ENCODE measurements at regions of chrX and their contacts with region 1.

Region 1: GRCh38 chrX:46573331-46573891 is at the start of gene CHST7:
- DNase-seq: peak; percentile 73
- H3K4me3 Mint-ChIP-seq: peak within 1 kb of the TSS; percentile 76
- H3K27ac Mint-ChIP-seq: peak within 1 kb of the TSS; percentile 91
- H3K4me1 Mint-ChIP-seq: peaks cover 47% of the 10 kb centered on the region
- H3K27me3 Mint-ChIP-seq: no peaks in the 10 kb centered on the region
- total RNA-seq, gene CHST7: 5.1 to 6.1 TPM

Region 2: GRCh38 chrX:45769761-45770582 is 803.4 kb before region 1 on chrX:
- CTCF ChIA-PET with region 1: no interaction called
- POLR2A ChIA-PET with region 1: no interaction called
- intact Hi-C with region 1: loop called (anchors 10 kb)
- DNase-seq: peak; percentile 63
- H3K4me3 Mint-ChIP-seq: peak overlapping the region; percentile 84
- H3K27ac Mint-ChIP-seq: peak overlapping the region; percentile 95
- H3K4me1 Mint-ChIP-seq: peaks cover 54% of the 10 kb centered on the region
- H3K27me3 Mint-ChIP-seq: no peaks in the 10 kb centered on the region

Region 3: GRCh38 chrX:46366381-46367207 is 206.8 kb before region 1 on chrX:
- CTCF ChIA-PET with region 1: no interaction called
- POLR2A ChIA-PET with region 1: no interaction called
- intact Hi-C with region 1: no loop called
- DNase-seq: no peak
- H3K4me3 Mint-ChIP-seq: no peak overlapping the region
- H3K27ac Mint-ChIP-seq: no peak overlapping the region
- H3K4me1 Mint-ChIP-seq: no peaks in the 10 kb centered on the region
- H3K27me3 Mint-ChIP-seq: no peaks in the 10 kb centered on the region

Region 4: DNA sequence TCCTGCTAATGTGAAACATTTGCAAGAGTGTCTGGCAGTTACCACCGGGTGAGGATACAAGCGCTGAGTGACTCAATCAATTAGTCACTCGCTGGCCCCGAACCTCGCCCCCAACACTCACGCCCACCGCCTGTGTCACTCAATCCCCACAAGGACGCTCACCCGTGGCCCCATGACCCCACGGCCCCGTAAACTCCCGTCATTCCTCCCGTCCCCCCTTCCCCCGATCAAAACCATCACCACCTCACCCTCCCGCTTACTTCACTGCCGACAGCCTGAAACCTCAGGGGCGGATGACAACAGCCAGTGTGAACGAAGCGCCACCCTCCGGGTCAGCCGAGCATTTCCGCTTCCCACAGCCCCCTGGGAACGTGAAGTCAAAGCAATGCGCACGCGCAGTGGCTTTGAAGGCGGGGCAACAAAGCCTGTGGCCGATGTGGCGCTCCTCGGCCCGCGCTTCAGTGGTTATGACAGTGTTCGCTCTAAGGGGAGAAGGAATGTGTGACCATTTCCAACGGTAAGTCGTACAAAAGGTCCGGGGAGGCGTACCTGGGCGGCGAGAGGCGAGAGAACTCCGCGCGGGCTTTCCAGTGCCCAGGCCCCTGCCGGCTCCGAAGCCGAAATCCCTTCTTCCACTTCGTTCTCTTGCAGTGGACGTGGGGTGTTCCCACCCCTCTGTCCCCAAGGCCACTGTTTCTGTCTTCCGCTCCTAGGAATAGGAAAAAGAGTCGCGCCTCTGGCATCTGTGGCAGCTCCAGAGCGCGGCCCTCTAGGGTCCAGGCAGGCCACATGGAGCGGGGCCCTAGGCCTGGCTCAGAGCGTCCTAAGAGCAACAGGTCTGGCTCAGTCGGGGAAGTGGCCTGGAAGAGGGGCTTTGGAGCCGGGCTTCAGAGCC is 28.1 kb before region 1 on chrX and contains the start of gene ZNF674:
- CTCF ChIA-PET with region 1: no interaction called
- POLR2A ChIA-PET with region 1: no interaction called
- intact Hi-C with region 1: loop called (anchors 1 kb)
- DNase-seq: peak; percentile 95
- H3K4me3 Mint-ChIP-seq: peak within 1 kb of the TSS; percentile 92
- H3K27ac Mint-ChIP-seq: peak within 1 kb of the TSS; percentile 97
- H3K4me1 Mint-ChIP-seq: peaks cover 25% of the 10 kb centered on the region
- H3K27me3 Mint-ChIP-seq: no peaks in the 10 kb centered on the region
- total RNA-seq, gene ZNF674: 2.6 to 3.0 TPM

Region 5: GRCh38 chrX:46611658-46612362 is 38.4 kb after region 1 on chrX:
- CTCF ChIA-PET with region 1: no interaction called
- POLR2A ChIA-PET with region 1: interaction called, 3 read pairs
- intact Hi-C with region 1: loop called (anchors 5 kb)
- DNase-seq: peak; percentile 51
- H3K4me3 Mint-ChIP-seq: peak overlapping the region; percentile 28
- H3K27ac Mint-ChIP-seq: peak overlapping the region; percentile 62
- H3K4me1 Mint-ChIP-seq: peaks cover 35% of the 10 kb centered on the region
- H3K27me3 Mint-ChIP-seq: no peaks in the 10 kb centered on the region

Region 6: GRCh38 chrX:46642145-46642544 is 68.7 kb after region 1 on chrX:
- CTCF ChIA-PET with region 1: interaction called, 3 read pairs
- POLR2A ChIA-PET with region 1: interaction called, 3 read pairs
- intact Hi-C with region 1: loop called (anchors 1 kb)
- DNase-seq: no peak
- H3K4me3 Mint-ChIP-seq: no peak overlapping the region
- H3K27ac Mint-ChIP-seq: no peak overlapping the region
- H3K4me1 Mint-ChIP-seq: peaks cover 17% of the 10 kb centered on the region
- H3K27me3 Mint-ChIP-seq: no peaks in the 10 kb centered on the region

Region 7: DNA sequence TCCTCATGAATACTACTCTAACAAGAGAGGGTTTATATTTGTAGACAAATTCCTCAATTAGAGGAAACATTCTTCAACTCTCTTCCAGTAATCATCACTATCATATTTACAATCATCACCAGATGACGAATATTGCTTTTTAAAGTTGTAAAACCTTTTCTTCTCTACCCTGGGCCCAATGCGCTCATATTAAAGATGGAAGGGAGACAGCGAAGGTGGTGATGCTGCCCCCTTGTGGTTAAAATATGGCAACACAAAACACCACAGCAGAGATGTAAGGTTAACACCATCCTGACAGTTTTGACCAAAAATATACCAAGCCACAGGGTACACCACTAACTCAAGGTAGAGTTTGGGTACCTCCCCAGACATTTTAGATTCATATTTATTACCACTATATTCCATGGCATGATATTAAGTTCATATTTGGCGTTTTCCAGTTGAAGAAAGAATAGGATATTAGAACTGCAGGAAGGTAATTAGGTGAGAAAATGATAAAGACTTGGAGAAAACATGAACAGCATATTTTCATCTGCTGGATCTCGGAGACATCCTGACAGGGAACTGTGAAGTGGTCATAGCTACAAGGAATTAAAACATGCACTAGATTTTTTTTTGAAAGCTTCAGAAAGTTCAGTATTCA is 112.7 kb after region 1 on chrX:
- CTCF ChIA-PET with region 1: no interaction called
- POLR2A ChIA-PET with region 1: no interaction called
- intact Hi-C with region 1: no loop called
- DNase-seq: peak; percentile 52
- H3K4me3 Mint-ChIP-seq: no peak overlapping the region
- H3K27ac Mint-ChIP-seq: no peak overlapping the region
- H3K4me1 Mint-ChIP-seq: peaks cover 14% of the 10 kb centered on the region
- H3K27me3 Mint-ChIP-seq: no peaks in the 10 kb centered on the region

Region 8: DNA sequence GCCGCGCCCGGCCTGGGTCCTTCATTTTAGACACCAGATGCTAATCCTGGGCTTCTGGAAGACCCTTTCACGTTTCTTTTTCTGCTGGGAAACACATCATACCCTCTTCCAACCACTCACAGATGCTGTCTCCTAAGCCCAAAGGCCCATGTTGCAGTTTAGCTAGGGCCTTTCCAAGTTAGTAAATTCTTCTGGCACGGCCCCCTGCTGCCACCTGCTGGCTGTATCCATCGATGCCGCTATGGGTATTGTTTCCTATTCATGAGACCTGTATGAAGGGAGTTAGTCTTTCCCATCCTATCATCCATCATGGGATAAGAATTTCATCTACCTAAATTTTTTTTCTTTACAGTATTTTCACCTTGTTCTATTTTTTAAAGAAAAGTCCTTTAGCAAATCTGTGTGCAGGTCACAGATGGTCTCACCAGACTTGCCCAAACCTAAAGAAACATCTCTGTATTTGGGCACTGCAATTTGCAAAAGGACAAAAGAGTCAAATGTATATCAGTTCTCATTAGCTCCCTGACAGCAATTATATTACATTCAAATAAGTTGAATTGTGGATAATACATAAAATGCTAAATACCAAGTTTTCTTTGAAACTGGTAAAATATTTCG is 223.3 kb after region 1 on chrX:
- CTCF ChIA-PET with region 1: no interaction called
- POLR2A ChIA-PET with region 1: no interaction called
- intact Hi-C with region 1: loop called (anchors 5 kb)
- DNase-seq: peak; percentile 84
- H3K4me3 Mint-ChIP-seq: no peak overlapping the region
- H3K27ac Mint-ChIP-seq: no peak overlapping the region
- H3K4me1 Mint-ChIP-seq: peaks cover 19% of the 10 kb centered on the region
- H3K27me3 Mint-ChIP-seq: no peaks in the 10 kb centered on the region

Measured in activated CD4-positive, alpha-beta memory T cell treated with anti-CD3 and anti-CD28 coated beads for 36 hours (primary cell).